ENCODE measurements at regions of chr11 and their contacts with region 1.

Region 1: DNA sequence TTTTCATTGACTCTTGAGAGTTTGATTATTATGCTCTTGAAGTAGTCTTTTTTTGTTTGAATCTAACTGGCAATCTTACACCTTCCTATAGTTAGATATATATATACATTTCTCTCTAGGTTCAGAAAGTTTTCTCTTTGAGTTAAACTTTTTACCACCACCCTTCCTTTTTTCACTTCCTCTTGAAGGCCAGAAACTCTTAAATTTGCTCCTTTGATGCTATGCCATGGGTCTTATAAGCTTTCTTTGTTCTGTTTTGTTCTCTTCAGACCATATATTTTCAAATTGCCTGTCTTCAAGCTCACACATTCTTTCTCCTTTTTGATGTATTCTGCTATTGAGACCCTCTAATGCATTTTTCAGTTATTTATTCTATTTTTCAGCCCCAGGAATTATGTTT is 513.5 kb upstream of the CNTN5 start:
- DNase-seq: no peak

Region 2: GRCh38 chr11:97389270-97389669 is 1117.9 kb before region 1 on chr11:
- intact Hi-C with region 1: loop called in 1 of 2 experiments (anchors 5 kb)
- DNase-seq: no peak